Posterior cingulate gyrus (tissue), 11 donors: ENCODE measurements at regions of chr9 and their contacts with region 1.

Region 1: GRCh38 chr9:93309889-93310425 is 126.0 kb downstream of the WNK2 start:
- DNase-seq: peak in 1 of 10 donors; percentile 8

Region 2: DNA sequence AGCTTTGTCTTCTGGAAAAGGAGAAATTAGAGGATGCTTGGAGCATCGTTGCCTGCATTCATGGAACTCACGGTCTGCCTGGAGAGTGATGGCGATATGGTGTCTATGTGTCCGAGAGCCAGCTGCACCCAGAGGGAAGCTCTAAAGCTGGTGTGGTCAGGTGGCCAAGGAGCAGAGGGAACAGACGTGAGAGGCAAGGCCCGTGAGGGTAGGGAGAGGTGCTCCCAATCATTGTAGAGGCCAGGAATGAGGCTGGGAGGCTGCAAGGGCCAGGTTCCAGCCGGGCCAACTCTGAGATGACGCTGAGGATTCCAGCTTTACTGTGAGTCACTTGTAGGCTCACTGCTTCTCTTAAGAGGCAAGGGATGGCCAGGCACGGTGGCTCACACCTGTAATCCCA is 355.1 kb before region 1 on chr9:
- intact Hi-C with region 1: loop called (anchors 5 kb)
- DNase-seq: no peak